ENCODE measurements at regions of chr22 and their contacts with region 1.

Region 1: DNA sequence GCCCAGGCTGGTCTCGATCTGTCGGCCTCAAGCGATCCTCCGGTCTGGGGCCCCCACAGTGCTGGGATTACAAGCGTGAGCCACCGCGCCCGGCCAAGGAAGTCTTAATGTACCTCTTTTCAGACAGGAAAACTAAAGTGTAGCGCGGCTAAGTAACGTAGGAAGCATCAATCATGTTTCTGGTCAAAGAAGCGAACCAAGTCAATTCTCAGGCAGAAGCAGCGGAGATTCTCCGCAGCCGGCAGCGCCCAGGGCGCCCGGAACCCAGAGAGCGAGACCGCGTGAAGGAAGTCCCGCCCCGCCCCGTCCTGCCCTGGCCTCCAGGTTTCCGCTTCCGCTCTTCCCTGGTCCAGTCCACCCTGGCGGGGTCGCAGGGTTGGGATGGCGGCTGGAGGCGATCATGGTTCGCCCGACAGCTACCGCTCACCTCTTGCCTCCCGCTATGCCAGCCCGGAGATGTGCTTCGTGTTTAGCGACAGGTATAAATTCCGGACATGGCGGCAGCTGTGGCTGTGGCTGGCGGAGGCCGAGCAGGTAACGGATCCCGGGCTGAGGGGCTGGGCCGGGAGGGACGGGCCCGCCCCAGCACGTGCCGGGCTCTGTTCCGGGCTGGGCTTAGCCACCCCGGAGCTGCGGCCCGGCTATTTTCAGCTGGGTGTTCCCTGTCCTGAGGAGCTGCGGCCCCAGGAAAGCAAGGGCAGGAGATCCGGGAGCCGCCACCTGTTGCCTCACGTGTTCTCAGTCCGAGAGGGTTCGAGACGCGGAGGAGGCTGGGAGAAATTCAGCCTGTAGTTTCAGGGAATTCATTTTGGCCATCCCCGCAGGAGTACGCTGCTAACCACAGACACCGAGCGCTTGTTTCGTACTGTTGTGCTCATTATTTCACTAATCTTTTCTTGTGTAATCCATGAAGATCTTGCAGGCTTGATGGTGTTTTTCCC is at the start of gene ADSL:
- DNase-seq: peak; percentile 91
- H3K4me3 Mint-ChIP-seq: peak within 1 kb of the TSS; percentile 98
- H3K27ac Mint-ChIP-seq: peak within 1 kb of the TSS; percentile 100
- H3K4me1 Mint-ChIP-seq: peaks cover 56% of the 10 kb centered on the region
- H3K27me3 Mint-ChIP-seq: no peaks in the 10 kb centered on the region

Region 2: GRCh38 chr22:40036591-40037225 is 309.7 kb before region 1 on chr22:
- CTCF ChIA-PET with region 1: interaction called, 15 read pairs
- DNase-seq: peak; percentile 71
- H3K4me3 Mint-ChIP-seq: no peak overlapping the region
- H3K27ac Mint-ChIP-seq: no peak overlapping the region
- H3K4me1 Mint-ChIP-seq: peaks cover 5% of the 10 kb centered on the region
- H3K27me3 Mint-ChIP-seq: peaks cover 60% of the 10 kb centered on the region

Region 3: DNA sequence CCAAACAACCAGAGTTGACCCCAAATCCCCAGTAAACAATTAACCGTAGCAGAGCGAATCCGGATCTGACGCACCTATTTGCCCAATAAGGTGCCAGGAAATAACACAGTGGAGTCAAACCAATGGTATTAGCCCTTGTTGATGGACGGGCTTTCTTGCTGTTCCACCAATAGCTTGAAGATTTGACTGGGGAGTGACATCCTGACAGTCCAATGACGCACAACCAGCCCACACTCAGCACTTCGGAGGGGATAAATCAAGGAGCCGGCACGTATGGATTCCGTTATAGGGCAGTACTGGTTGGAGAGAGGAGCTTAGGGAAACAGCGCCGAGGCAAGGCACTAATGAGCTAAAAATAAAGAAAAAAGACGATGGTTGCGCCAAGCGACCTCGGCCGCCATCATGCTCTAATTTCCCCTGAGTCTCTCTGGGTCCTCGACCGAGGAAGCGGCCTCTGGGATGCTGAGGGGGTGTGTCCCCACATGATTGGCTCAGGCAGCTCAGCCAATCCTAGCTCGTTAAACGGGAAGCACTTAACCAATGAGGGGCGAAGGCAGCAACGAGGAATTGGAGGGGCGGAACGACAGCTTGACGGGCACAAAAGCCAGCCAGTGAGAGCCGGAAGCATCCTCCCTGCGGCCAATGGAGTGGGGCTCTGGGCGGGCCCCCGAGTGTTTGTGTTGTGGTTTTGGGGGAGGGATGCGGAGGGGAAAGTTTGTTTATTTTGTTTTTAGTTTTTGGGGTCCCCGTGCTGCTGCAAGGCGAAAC is 302.2 kb before region 1 on chr22:
- CTCF ChIA-PET with region 1: interaction called, 28 read pairs
- DNase-seq: peak; percentile 99
- H3K4me3 Mint-ChIP-seq: peak overlapping the region; percentile 86
- H3K27ac Mint-ChIP-seq: peak overlapping the region; percentile 97
- H3K4me1 Mint-ChIP-seq: peaks cover 37% of the 10 kb centered on the region
- H3K27me3 Mint-ChIP-seq: peaks cover 22% of the 10 kb centered on the region

Region 4: GRCh38 chr22:40193429-40194421 is 152.7 kb before region 1 on chr22:
- CTCF ChIA-PET with region 1: interaction called, 23 read pairs
- DNase-seq: no peak
- H3K4me3 Mint-ChIP-seq: no peak overlapping the region
- H3K27ac Mint-ChIP-seq: peak overlapping the region; percentile 70
- H3K4me1 Mint-ChIP-seq: peaks cover 45% of the 10 kb centered on the region
- H3K27me3 Mint-ChIP-seq: no peaks in the 10 kb centered on the region

Region 5: DNA sequence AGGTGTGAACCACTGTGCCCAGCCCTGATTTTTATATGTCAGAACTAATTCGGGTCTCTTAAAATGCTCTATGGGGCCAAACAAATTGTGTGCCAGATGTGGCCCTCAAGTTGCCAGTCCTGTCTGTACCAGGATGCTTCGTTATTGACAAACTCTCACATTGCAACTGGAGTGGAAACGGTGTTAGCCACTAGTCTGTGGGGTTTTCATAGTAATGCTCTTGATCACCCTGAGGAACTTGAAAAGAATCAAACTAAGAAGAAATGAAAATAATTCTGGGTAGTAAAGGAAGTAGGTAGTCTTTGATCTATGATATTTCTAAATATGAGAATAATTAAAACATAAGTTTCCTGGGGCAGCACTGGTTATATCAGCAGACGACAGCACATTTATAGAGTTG is 67.4 kb before region 1 on chr22:
- CTCF ChIA-PET with region 1: interaction called, 10 read pairs
- DNase-seq: no peak
- H3K4me3 Mint-ChIP-seq: no peak overlapping the region
- H3K27ac Mint-ChIP-seq: peak overlapping the region; percentile 71
- H3K4me1 Mint-ChIP-seq: peaks cover 59% of the 10 kb centered on the region
- H3K27me3 Mint-ChIP-seq: no peaks in the 10 kb centered on the region

Region 6: GRCh38 chr22:40332319-40332781 is 14.1 kb before region 1 on chr22:
- CTCF ChIA-PET with region 1: interaction called, 12 read pairs
- DNase-seq: no peak
- H3K4me3 Mint-ChIP-seq: peak overlapping the region; percentile 26
- H3K27ac Mint-ChIP-seq: peak overlapping the region; percentile 79
- H3K4me1 Mint-ChIP-seq: peaks cover 94% of the 10 kb centered on the region
- H3K27me3 Mint-ChIP-seq: no peaks in the 10 kb centered on the region